Upper lobe of right lung (tissue), 1 donor: ENCODE measurements at regions of chr6 and their contacts with region 1.

Region 1: GRCh38 chr6:138287144-138287955 is 69.1 kb upstream of the PBOV1 start:
- DNase-seq: no peak
- ATAC-seq: peak; percentile 92
- H3K4me3 ChIP-seq: no peak overlapping the region
- H3K27ac ChIP-seq: no peak overlapping the region
- H3K4me1 ChIP-seq: no peaks in the 10 kb centered on the region
- H3K27me3 ChIP-seq: no peaks in the 10 kb centered on the region
- CTCF ChIP-seq: peak; percentile 67

Region 2: DNA sequence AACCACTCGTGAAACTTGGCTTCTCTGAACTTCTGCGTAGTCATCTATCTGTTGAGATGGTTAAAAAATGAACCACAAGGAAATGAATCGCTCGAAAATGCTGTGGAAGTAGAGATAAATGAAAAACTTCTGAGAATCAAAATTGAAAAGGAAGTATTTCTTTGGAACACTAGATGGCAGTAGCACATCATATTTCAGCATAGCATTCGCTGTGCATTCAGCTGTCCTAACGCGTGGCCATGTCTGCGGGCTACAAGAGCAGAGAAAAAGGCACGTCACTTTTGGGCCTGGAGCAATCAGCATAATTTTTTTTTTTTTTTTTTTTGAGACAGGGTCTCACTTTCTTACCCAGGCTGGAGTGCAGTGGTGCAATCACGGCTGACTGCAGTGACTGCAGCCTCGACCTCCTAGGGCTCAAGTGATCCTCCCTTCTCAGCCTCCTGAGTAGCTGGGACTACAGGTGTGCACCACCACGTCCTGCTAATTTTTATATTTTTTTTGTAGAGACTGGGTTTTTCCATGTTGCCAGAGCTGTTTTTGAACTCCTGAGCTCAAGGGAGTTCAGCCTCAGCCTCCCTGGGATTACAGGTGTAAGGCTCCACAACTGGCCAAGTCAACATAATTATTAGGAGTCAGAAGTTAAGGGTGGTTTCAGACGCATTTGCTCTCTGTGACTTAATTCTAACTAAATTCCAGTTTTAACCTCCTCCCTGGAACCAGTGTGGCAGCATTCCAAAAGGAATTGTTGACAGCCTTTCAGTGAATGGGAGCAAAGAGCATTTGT is 171.3 kb before region 1 on chr6:
- intact Hi-C with region 1: loop called (anchors 10 kb)
- DNase-seq: no peak
- ATAC-seq: peak; percentile 94
- H3K4me3 ChIP-seq: no peak overlapping the region
- H3K27ac ChIP-seq: no peak overlapping the region
- H3K4me1 ChIP-seq: no peaks in the 10 kb centered on the region
- H3K27me3 ChIP-seq: peaks cover 8% of the 10 kb centered on the region
- CTCF ChIP-seq: peak; percentile 73

Region 3: GRCh38 chr6:138346302-138347195 is 59.2 kb after region 1 on chr6:
- intact Hi-C with region 1: no loop called
- DNase-seq: no peak
- ATAC-seq: no peak
- H3K4me3 ChIP-seq: no peak overlapping the region
- H3K27ac ChIP-seq: no peak overlapping the region
- H3K4me1 ChIP-seq: no peaks in the 10 kb centered on the region
- H3K27me3 ChIP-seq: no peaks in the 10 kb centered on the region
- CTCF ChIP-seq: no peak